ENCODE measurements at regions of chr1 and their contacts with region 1.

Region 1: GRCh38 chr1:78617615-78618026 is 2.6 kb upstream of the IFI44L start:
- DNase-seq: peak; percentile 95
- H3K4me3 ChIP-seq: no peak overlapping the region
- H3K27ac ChIP-seq: no peak overlapping the region
- H3K4me1 ChIP-seq: peaks cover 31% of the 10 kb centered on the region
- H3K27me3 ChIP-seq: no peaks in the 10 kb centered on the region
- CTCF ChIP-seq: peak; percentile 88

Region 2: GRCh38 chr1:78370356-78370755 is 247.3 kb before region 1 on chr1:
- CTCF ChIA-PET with region 1: no interaction called
- POLR2A ChIA-PET with region 1: no interaction called
- intact Hi-C with region 1: no loop called
- DNase-seq: no peak
- H3K4me3 ChIP-seq: no peak overlapping the region
- H3K27ac ChIP-seq: no peak overlapping the region
- H3K4me1 ChIP-seq: peaks cover 4% of the 10 kb centered on the region
- H3K27me3 ChIP-seq: no peaks in the 10 kb centered on the region
- CTCF ChIP-seq: no peak

Region 3: GRCh38 chr1:78401148-78401547 is 216.5 kb before region 1 on chr1:
- CTCF ChIA-PET with region 1: no interaction called
- POLR2A ChIA-PET with region 1: no interaction called
- intact Hi-C with region 1: no loop called
- DNase-seq: no peak
- H3K4me3 ChIP-seq: no peak overlapping the region
- H3K27ac ChIP-seq: no peak overlapping the region
- H3K4me1 ChIP-seq: no peaks in the 10 kb centered on the region
- H3K27me3 ChIP-seq: no peaks in the 10 kb centered on the region
- CTCF ChIP-seq: no peak

Region 4: GRCh38 chr1:78649628-78650027 is 32.0 kb after region 1 on chr1 and contains the start of gene IFI44:
- CTCF ChIA-PET with region 1: no interaction called
- POLR2A ChIA-PET with region 1: interaction called, 3 read pairs
- intact Hi-C with region 1: loop called (anchors 2 kb)
- DNase-seq: peak; percentile 94
- H3K4me3 ChIP-seq: peak within 1 kb of the TSS; percentile 42
- H3K27ac ChIP-seq: peak within 1 kb of the TSS; percentile 35
- H3K4me1 ChIP-seq: peaks cover 9% of the 10 kb centered on the region
- H3K27me3 ChIP-seq: no peaks in the 10 kb centered on the region
- CTCF ChIP-seq: no peak
- total RNA-seq, gene IFI44: 27.8 and 29.0 TPM in 2 replicates

Region 5: GRCh38 chr1:78676347-78676982 is 58.8 kb after region 1 on chr1:
- CTCF ChIA-PET with region 1: interaction called, 3 read pairs
- POLR2A ChIA-PET with region 1: no interaction called
- intact Hi-C with region 1: loop called (anchors 1 kb)
- DNase-seq: peak; percentile 76
- H3K4me3 ChIP-seq: no peak overlapping the region
- H3K27ac ChIP-seq: no peak overlapping the region
- H3K4me1 ChIP-seq: no peaks in the 10 kb centered on the region
- H3K27me3 ChIP-seq: no peaks in the 10 kb centered on the region
- CTCF ChIP-seq: peak; percentile 91

Region 6: GRCh38 chr1:78831731-78832360 is 214.2 kb after region 1 on chr1:
- CTCF ChIA-PET with region 1: no interaction called
- POLR2A ChIA-PET with region 1: no interaction called
- intact Hi-C with region 1: loop called (anchors 5 kb)
- DNase-seq: peak; percentile 80
- H3K4me3 ChIP-seq: no peak overlapping the region
- H3K27ac ChIP-seq: no peak overlapping the region
- H3K4me1 ChIP-seq: peaks cover 25% of the 10 kb centered on the region
- H3K27me3 ChIP-seq: no peaks in the 10 kb centered on the region
- CTCF ChIP-seq: no peak

Region 7: GRCh38 chr1:78996791-78997190 is 379.2 kb after region 1 on chr1:
- CTCF ChIA-PET with region 1: no interaction called
- POLR2A ChIA-PET with region 1: no interaction called
- intact Hi-C with region 1: no loop called
- DNase-seq: no peak
- H3K4me3 ChIP-seq: no peak overlapping the region
- H3K27ac ChIP-seq: no peak overlapping the region
- H3K4me1 ChIP-seq: no peaks in the 10 kb centered on the region
- H3K27me3 ChIP-seq: no peaks in the 10 kb centered on the region
- CTCF ChIP-seq: no peak

Region 8: DNA sequence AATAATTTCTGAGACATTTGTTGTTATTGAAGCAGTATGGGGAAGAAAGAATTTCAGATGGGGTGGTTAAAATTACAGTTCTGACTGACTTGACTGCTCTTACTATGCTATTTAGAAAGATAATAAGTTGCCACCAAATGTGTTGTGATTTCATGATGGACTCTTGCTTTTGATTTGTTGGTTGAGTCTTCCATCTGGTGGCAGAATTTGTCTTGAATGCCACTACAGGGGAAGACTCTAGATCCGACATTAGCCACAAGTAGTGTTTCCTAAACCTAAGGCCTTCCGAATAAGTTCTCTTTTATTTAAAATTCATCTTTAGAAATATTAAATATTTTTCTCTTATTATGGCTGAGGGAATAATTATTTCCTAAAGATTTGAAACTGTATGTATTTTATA is 579.8 kb after region 1 on chr1:
- CTCF ChIA-PET with region 1: no interaction called
- POLR2A ChIA-PET with region 1: no interaction called
- intact Hi-C with region 1: loop called (anchors 5 kb)
- DNase-seq: peak; percentile 60
- H3K4me3 ChIP-seq: no peak overlapping the region
- H3K27ac ChIP-seq: no peak overlapping the region
- H3K4me1 ChIP-seq: peaks cover 3% of the 10 kb centered on the region
- H3K27me3 ChIP-seq: no peaks in the 10 kb centered on the region
- CTCF ChIP-seq: peak; percentile 63

Measured in A673 (cell line).